ENCODE measurements at regions of chr7 and their contacts with region 1.

Region 1: GRCh38 chr7:82428186-82428961 is 15.2 kb downstream of the CACNA2D1 start:
- DNase-seq: no peak
- H3K4me3 ChIP-seq: no peak overlapping the region
- H3K27ac ChIP-seq: no peak overlapping the region
- H3K4me1 ChIP-seq: no peaks in the 10 kb centered on the region
- H3K27me3 ChIP-seq: no peaks in the 10 kb centered on the region
- CTCF ChIP-seq: no peak

Region 2: DNA sequence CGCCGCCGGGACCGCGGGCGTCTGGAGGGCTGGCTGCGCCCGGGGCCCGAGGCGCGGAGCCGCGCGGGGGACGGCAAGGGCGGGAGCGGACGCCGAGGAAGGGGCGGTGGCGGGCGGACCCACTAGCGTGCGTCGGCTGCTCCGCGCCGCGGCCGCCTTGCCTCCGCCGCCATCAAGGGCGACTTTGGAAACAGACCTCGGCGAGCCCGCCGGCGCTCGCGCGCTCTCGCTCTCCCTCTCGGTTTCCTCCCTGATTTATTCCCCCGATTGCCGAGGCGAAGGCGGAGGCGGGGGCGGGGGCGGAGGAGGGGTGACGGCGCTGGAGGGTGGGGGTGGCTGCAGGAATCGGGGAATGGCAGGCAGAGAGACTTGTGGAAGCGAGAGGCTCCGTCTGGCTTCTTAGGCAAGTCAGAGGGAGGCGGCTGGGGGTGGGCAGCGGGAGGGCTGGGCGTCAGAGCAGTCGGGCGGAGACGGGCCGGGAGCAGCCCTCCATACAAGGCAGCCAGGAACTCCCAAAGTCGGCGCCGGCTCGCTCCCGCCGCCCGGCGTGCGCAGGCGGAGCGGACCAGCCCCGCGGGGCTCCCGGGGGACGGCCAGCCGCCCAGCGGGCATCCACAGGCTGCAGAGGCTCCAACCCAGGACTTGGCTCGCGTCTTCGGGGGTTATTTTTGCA is 15.3 kb after region 1 on chr7 and contains the start of gene CACNA2D1:
- CTCF ChIA-PET with region 1: no interaction called
- POLR2A ChIA-PET with region 1: interaction called, 15 read pairs
- intact Hi-C with region 1: no loop called
- DNase-seq: peak in 1 of 2 experiments; percentile 66
- H3K4me3 ChIP-seq: peak within 1 kb of the TSS; percentile 95
- H3K27ac ChIP-seq: no peak within 1 kb of the TSS
- H3K4me1 ChIP-seq: peaks cover 12% of the 10 kb centered on the region; the same call in 1 of the 2 replicates
- H3K27me3 ChIP-seq: no peaks in the 10 kb centered on the region
- CTCF ChIP-seq: no peak
- total RNA-seq, gene CACNA2D1: 2.5 and 3.2 TPM in 2 replicates